Right ventricle myocardium inferior (tissue), 1 donor: ENCODE measurements at regions of chr10 and their contacts with region 1.

Region 1: GRCh38 chr10:24503461-24504320 is 220.0 kb downstream of the ARHGAP21 start:
- DNase-seq: no peak
- ATAC-seq: no peak

Region 2: GRCh38 chr10:24197263-24197662 is 306.4 kb before region 1 on chr10:
- intact Hi-C with region 1: loop called (anchors 5 kb)
- DNase-seq: no peak
- ATAC-seq: no peak

Region 3: DNA sequence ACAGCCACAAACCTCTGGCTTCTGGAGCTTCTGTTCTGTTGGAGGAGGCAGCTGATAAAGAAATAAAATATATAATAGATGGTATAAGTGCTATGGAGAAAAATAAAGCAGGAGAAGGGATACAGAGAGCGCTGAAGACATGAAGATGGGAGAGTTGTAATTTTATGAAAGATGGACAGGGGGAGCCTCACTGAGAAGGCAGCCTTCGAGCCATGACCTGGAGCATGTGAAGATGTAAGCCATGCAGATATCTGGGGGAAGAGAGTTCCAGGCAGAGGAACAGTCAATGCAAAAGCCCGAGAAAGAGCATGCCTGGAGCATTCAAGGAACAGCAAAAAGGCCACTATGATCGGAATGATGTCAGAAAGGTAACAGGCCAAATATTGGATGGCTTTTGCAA is 107.3 kb before region 1 on chr10:
- intact Hi-C with region 1: loop called (anchors 10 kb)
- DNase-seq: no peak
- ATAC-seq: no peak

Region 4: GRCh38 chr10:24541239-24542048 is 37.8 kb after region 1 on chr10:
- intact Hi-C with region 1: no loop called
- DNase-seq: no peak
- ATAC-seq: no peak